Activated CD4-positive, alpha-beta T cell treated with anti-CD3 and anti-CD28 coated beads, Interleukin-2, amount 10 ng/mL, durations not matched to agents 24 days and 14 days (primary cell): ENCODE measurements at regions of chr1 and their contacts with region 1.

Region 1: GRCh38 chr1:40161125-40161887 is at the start of gene RLF:
- DNase-seq: peak; percentile 99
- H3K4me3 Mint-ChIP-seq: no peak within 1 kb of the TSS
- H3K27ac Mint-ChIP-seq: no peak within 1 kb of the TSS
- H3K4me1 Mint-ChIP-seq: peaks cover 30% of the 10 kb centered on the region
- H3K27me3 Mint-ChIP-seq: peaks cover 2% of the 10 kb centered on the region
- total RNA-seq, gene RLF: 21.2 TPM in 2 replicates

Region 2: DNA sequence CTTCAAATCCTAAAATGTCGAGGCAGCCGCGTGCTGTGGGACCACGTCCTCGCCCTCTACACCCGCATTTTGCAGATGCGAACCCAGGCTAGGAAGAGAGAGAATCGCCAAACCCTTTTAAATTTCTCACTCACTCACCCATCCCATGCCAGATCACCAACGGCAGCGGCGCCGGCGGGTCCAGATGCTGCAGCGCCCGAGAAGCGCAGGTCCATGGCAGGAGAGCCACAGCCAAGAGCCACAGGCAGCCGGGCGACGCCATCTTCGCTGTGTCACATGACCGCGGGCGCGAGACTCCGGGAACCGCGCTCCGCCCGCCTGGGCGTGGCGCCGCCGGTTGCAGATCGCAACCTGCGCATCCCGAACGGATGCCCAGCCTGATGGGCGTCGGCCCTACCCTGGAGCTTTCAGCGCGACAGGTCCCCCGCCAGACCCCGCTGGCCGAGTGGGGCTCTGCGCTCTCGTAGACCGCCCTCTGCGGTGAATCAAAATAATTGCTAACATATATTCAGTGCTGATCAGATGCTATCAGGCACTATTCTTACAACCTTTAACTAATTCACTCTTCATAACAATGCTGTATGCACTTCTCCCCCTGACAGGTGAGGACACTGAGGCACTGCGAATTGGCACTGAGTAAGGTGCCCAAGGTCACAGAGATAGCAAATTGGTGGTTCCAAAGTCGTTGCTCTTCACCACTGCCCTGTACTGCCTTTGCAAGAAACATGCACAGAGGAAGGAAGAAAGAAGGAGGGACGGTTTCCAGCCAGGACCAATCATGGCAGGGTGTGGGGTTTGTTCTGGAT is 64.1 kb before region 1 on chr1 and contains the start of gene PPT1:
- intact Hi-C with region 1: loop called (anchors 2 kb)
- DNase-seq: peak; percentile 95
- H3K4me3 Mint-ChIP-seq: peak within 1 kb of the TSS; percentile 99
- H3K27ac Mint-ChIP-seq: peak within 1 kb of the TSS; percentile 89
- H3K4me1 Mint-ChIP-seq: peaks cover 35% of the 10 kb centered on the region
- H3K27me3 Mint-ChIP-seq: peaks cover 9% of the 10 kb centered on the region
- total RNA-seq, gene PPT1: 99.0 and 102 TPM in 2 replicates

Region 3: DNA sequence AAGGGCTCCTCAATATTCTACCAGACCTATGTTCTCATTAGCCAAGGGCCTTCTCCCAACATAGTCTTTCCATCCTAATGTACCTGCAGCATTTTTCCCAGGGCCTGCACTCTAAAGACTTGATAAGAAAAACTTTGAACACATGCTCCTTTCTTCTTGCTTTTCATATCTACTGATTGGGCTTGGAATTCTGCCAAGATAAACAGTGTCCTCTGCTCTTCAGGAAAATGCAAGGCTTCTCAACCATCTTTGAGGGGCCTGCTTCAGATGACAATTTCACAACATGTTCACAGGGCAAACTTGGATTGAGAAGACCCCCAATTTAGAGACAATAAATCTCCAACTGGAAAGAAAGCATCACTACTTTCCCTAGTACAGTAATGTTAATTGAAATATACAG is 38.5 kb before region 1 on chr1:
- intact Hi-C with region 1: no loop called
- DNase-seq: no peak
- H3K4me3 Mint-ChIP-seq: no peak overlapping the region
- H3K27ac Mint-ChIP-seq: no peak overlapping the region
- H3K4me1 Mint-ChIP-seq: no peaks in the 10 kb centered on the region
- H3K27me3 Mint-ChIP-seq: peaks cover 23% of the 10 kb centered on the region

Region 4: GRCh38 chr1:40224040-40224439 is 62.7 kb after region 1 on chr1:
- intact Hi-C with region 1: loop called (anchors 5 kb)
- DNase-seq: no peak
- H3K4me3 Mint-ChIP-seq: no peak overlapping the region
- H3K27ac Mint-ChIP-seq: peak overlapping the region; percentile 53
- H3K4me1 Mint-ChIP-seq: peaks cover 24% of the 10 kb centered on the region
- H3K27me3 Mint-ChIP-seq: no peaks in the 10 kb centered on the region

Region 5: GRCh38 chr1:40257688-40258444 is 96.6 kb after region 1 on chr1 and contains the start of gene ZMPSTE24:
- intact Hi-C with region 1: loop called (anchors 1 kb)
- DNase-seq: peak; percentile 98
- H3K4me3 Mint-ChIP-seq: peak within 1 kb of the TSS; percentile 87
- H3K27ac Mint-ChIP-seq: peak within 1 kb of the TSS; percentile 99
- H3K4me1 Mint-ChIP-seq: peaks cover 31% of the 10 kb centered on the region
- H3K27me3 Mint-ChIP-seq: no peaks in the 10 kb centered on the region
- total RNA-seq, gene ZMPSTE24: 50.4 and 50.8 TPM in 2 replicates

Region 6: GRCh38 chr1:40315239-40315794 is 154.0 kb after region 1 on chr1:
- intact Hi-C with region 1: loop called (anchors 2 kb)
- DNase-seq: peak; percentile 95
- H3K4me3 Mint-ChIP-seq: peak overlapping the region; percentile 80
- H3K27ac Mint-ChIP-seq: peak overlapping the region; percentile 41
- H3K4me1 Mint-ChIP-seq: peaks cover 47% of the 10 kb centered on the region
- H3K27me3 Mint-ChIP-seq: peaks cover 24% of the 10 kb centered on the region

Region 7: DNA sequence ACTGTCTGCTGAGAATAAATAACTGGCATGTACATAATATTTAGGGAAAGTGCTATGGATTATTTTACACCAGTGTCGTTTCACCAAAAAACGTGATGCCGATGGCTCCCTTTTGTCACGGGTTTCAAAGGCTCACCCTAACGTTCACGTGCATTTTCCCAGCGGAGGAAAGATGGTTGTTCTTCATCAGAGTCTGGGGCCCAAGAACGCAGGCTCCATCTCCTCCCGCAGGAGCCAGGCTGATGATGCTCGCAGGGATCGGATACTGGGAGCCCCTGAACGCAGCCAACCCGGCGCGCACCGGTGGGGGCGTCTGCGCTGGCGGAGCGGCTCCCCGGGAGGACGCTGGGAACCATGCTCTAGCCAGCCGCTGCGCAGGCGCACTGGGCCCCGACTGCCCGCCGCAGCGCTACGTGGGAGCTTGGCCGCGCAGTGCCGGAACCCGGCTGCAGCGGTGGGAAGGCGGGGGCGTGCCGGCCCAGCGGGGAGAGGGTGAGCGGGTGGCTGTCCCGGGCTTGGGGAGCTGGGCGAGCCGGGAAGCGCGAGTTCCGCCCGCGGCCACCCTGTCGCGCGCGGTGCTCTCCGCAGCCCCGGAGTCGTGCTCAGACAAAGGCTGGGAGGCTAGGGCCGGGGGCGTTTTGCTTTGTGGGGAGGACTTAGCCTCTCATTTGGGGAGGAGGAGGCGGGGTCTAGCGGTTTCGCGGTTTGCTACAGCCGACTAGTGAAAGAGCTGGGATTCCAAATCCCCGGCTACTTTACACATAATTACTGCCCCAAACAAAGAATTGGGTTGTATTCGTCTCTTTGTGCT is 288.6 kb after region 1 on chr1 and contains the start of gene ZFP69B:
- intact Hi-C with region 1: loop called (anchors 1 kb)
- DNase-seq: peak; percentile 97
- H3K4me3 Mint-ChIP-seq: peak within 1 kb of the TSS; percentile 78
- H3K27ac Mint-ChIP-seq: peak within 1 kb of the TSS; percentile 91
- H3K4me1 Mint-ChIP-seq: peaks cover 28% of the 10 kb centered on the region
- H3K27me3 Mint-ChIP-seq: no peaks in the 10 kb centered on the region
- total RNA-seq, gene ZFP69B: 5.5 and 6.3 TPM in 2 replicates